ENCODE measurements at regions of chr10 and their contacts with region 1.

Region 1: DNA sequence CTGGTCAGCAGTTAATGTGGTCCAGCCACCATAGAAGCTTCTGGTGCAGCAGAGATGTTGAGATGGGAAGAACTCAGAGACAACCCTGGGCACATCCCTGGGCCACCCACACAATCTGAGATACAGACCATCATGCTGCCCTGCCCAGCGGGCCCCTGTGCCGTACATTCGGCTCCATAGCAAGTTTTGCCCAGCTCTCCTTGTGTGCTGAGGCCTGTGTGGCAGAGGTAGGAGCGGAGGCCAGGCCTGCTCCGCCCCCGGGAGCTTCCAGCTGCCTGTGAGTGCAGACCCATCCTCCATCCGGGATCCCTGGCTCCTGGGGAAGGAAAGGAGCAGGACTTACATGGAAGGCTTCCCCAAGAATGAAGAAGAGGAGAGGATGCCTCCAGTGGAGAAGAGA is 140.3 kb downstream of the NEURL1 start:
- DNase-seq: no peak
- H3K27ac ChIP-seq: peak overlapping the region; percentile 51
- CTCF ChIP-seq: no peak

Region 2: DNA sequence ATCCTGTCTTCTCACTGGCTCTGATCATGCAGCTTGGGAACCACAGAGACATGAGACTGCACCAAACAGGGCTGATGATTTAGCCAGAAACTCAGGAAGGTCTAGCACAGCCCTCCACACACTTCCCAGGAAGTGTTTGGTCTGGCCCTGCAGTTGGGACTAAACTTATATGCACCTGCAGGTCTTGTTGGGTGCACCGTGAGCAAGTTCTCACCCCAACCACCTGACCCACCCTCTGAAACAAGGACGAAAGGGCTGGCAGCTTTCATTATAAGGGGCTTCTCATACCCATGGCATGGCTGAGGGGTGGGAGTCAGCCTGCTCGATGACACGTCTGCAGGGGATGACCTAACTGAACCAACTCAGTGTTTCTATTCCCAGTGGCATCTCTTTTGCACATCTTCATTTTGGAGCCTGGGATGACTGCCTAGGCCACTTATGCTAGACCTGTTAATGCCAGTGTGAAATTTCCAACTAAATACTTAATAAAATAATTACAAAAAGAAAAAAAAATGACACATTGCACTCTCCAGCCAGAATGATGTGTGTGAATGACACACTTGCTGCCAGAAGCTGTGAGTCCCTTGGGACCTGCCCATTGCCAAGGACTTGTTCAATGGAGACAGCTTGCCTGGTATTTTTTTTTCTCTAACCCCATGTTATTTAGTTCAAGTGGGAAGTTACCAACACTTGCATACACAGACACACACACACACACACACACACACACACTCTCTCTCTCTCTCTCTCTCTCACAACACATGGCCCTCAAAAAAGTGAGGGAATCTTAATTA is 37.7 kb before region 1 on chr10:
- CTCF ChIA-PET with region 1: no interaction called
- POLR2A ChIA-PET with region 1: interaction called, 11 read pairs
- DNase-seq: no peak
- H3K27ac ChIP-seq: no peak overlapping the region
- CTCF ChIP-seq: no peak